RWPE1 (cell line): ENCODE measurements at regions of chr3 and their contacts with region 1.

Region 1: DNA sequence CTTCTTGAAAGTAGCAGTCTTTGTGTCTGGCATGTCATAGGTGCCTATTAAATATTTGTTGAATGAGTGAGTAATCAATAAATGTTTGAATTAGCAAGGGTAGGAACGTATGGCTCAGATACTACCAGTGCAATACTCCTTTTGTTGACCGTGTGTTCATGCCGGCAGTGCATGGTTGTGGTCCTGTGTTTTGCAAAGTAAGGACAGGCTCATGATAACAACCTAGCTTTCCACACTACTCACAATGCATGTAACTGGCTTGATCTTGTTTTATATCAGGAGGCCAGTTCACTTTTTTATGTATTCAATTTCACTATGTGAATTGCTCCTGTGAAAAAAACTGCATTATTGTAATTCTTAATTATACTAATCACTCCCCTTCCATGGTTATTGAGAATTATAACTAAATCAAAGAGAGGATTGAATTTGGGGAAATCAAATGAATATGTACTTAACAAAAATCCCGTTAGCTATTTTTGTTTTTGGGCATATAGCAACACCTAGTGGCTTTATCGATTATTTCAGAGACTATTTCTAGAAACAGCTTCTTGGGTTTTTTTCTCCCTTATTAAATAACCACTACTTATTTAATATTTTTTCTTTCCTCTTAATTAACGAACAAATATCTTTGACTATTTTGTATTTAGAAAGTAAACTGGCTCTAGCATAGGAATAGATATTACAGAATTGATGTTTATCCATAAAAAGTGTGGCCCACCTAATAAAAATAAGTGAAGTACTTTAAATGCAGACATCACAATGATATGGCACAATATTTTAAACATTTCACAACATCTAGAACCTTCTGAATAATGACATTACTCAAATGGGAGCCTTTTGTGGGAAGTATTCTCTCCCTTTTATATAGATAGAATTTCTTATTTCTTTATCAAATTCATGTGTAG is 218.5 kb downstream of the BBX start:
- DNase-seq: peak; percentile 14
- H3K27ac ChIP-seq: no peak overlapping the region
- CTCF ChIP-seq: peak; percentile 69

Region 2: GRCh38 chr3:107690522-107691138 is 50.6 kb before region 1 on chr3:
- CTCF ChIA-PET with region 1: interaction called, 11 read pairs
- POLR2A ChIA-PET with region 1: no interaction called
- DNase-seq: peak; percentile 36
- H3K27ac ChIP-seq: no peak overlapping the region
- CTCF ChIP-seq: peak; percentile 57